ENCODE measurements at regions of chr5 and their contacts with region 1.

Region 1: DNA sequence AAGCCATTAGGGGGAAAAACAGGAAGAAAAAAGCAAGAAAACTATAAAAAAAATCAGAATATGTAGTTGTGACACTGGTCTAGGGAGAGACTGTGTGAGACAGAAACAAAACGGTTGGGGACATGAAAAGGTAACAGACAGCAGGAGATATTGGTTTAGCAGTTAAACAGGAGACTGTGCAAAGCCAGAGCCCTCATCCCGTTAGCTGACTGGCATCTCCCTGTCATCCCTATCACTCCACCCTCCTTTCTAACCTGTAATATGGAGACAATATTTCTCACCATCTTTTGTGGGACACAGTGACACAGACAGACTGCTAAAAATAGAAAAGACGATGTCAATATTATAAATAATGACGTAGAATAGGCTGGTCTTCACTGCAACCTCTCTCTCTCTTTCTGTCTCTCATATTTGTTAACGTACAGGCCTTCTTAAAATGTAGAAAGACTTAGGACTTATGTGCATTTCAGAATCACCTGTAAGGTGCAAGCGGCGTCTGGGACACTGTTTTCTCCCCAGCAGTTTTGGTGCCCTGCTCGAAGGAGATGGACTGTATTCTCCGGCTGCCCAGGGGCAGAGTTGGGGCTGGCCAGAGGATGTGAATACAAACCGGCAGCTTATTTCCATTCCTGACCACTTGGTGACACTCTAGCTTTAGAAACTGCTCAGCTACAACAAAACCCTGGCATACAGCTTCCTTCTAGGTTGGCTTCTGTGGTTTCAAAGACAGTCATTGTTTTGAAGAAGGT is 190.6 kb downstream of the MAT2B start:
- DNase-seq: peak; percentile 38 to 52
- H3K4me3 ChIP-seq: no peak overlapping the region
- H3K4me3 Mint-ChIP-seq: no peak overlapping the region
- H3K27ac Mint-ChIP-seq: no peak overlapping the region
- H3K4me1 ChIP-seq: no peaks in the 10 kb centered on the region
- H3K4me1 Mint-ChIP-seq: no peaks in the 10 kb centered on the region
- H3K27me3 ChIP-seq: no peaks in the 10 kb centered on the region
- H3K27me3 Mint-ChIP-seq: peaks cover 5% of the 10 kb centered on the region
- CTCF ChIP-seq: peak in 1 of 2 experiments; percentile 66

Region 2: DNA sequence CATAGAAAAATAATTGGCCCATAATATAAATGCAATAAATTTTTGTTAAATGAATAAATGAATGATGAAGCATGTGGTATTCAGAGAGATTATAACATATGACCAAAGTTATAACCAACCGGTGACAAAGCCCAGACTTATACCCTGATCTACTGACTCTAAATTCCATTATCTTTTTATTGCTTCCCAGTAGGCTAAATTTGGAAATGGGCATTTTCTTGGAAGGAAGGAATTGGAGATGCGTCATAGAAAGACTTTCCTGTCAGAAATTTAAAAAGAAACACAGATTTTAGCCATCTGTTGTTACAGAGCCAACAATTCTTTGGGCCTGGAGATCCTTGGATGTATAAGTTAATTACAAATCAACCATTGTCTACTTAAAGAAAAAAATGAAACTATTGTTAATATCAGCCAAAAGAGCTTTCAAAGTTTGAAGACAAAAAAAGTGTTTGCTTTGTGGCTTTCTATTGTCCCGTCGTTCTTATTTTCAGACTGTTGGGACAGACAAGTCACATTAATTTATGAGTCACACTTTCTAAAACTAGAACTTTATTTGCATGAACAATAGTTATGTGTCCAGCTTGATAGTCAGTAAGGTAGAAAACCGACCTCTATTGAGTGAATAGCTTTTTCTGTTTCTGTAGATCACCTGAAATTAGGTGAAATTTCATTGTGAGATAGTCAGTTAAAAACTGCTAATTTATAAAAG is 1199.8 kb before region 1 on chr5:
- CTCF ChIA-PET with region 1: no interaction called
- POLR2A ChIA-PET with region 1: no interaction called
- intact Hi-C with region 1: no loop called
- DNase-seq: no peak
- H3K4me3 ChIP-seq: no peak overlapping the region
- H3K4me3 Mint-ChIP-seq: no peak overlapping the region
- H3K27ac Mint-ChIP-seq: no peak overlapping the region
- H3K4me1 ChIP-seq: no peaks in the 10 kb centered on the region
- H3K4me1 Mint-ChIP-seq: no peaks in the 10 kb centered on the region
- H3K27me3 ChIP-seq: no peaks in the 10 kb centered on the region
- H3K27me3 Mint-ChIP-seq: no peaks in the 10 kb centered on the region
- CTCF ChIP-seq: no peak

Region 3: DNA sequence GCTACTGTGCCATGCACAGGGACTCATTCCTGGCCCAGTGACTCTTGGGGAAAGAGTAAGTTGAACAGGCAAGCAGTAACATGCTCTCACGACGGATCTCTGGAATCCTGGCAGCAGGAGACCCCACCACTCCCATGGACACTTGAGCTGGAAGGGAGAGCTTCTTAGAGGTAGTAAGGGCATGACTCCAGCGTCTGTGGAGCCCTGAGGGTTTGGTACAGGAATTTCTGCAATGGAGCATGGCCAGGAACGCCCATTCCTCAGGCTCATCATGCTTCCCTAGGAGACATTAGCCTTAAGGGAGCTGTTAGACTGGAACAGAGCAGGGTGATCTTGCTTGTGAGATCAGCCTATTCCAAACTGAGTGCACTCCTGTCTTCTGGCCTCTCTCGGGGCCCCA is 22.3 kb after region 1 on chr5:
- CTCF ChIA-PET with region 1: no interaction called
- POLR2A ChIA-PET with region 1: no interaction called
- intact Hi-C with region 1: no loop called
- DNase-seq: peak in 1 of 2 experiments; percentile 36
- H3K4me3 ChIP-seq: no peak overlapping the region
- H3K4me3 Mint-ChIP-seq: no peak overlapping the region
- H3K27ac Mint-ChIP-seq: no peak overlapping the region
- H3K4me1 ChIP-seq: no peaks in the 10 kb centered on the region
- H3K4me1 Mint-ChIP-seq: no peaks in the 10 kb centered on the region
- H3K27me3 ChIP-seq: no peaks in the 10 kb centered on the region
- H3K27me3 Mint-ChIP-seq: peaks cover 5% of the 10 kb centered on the region
- CTCF ChIP-seq: no peak

Region 4: DNA sequence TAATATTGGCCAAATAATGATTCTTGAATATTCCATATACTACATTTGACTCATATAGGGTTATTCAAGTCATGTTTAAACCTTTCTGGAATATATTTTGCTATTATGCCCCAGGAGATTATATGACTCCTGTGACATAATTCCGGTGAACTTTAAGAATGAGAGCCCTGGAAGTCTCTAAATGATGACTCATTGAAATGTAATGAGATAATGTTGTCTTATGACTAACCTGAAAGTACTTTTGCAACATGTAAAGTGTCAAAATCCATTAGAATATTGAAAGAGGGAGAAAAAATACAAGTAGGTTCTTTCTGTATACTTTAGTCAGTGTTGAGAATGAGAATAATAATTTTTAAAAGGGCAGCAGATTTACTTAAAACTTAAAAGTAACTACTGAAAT is 639.8 kb after region 1 on chr5:
- CTCF ChIA-PET with region 1: no interaction called
- POLR2A ChIA-PET with region 1: no interaction called
- intact Hi-C with region 1: no loop called
- DNase-seq: no peak
- H3K4me3 ChIP-seq: no peak overlapping the region
- H3K4me3 Mint-ChIP-seq: no peak overlapping the region
- H3K27ac Mint-ChIP-seq: no peak overlapping the region
- H3K4me1 ChIP-seq: no peaks in the 10 kb centered on the region
- H3K4me1 Mint-ChIP-seq: no peaks in the 10 kb centered on the region
- H3K27me3 ChIP-seq: no peaks in the 10 kb centered on the region
- H3K27me3 Mint-ChIP-seq: peaks cover 4% of the 10 kb centered on the region
- CTCF ChIP-seq: no peak

Region 5: GRCh38 chr5:164475339-164475977 is 779.5 kb after region 1 on chr5:
- CTCF ChIA-PET with region 1: no interaction called
- POLR2A ChIA-PET with region 1: no interaction called
- intact Hi-C with region 1: loop called (anchors 1 kb)
- DNase-seq: peak in 1 of 2 experiments; percentile 19
- H3K4me3 ChIP-seq: no peak overlapping the region
- H3K4me3 Mint-ChIP-seq: no peak overlapping the region
- H3K27ac Mint-ChIP-seq: no peak overlapping the region
- H3K4me1 ChIP-seq: no peaks in the 10 kb centered on the region
- H3K4me1 Mint-ChIP-seq: no peaks in the 10 kb centered on the region
- H3K27me3 ChIP-seq: no peaks in the 10 kb centered on the region
- H3K27me3 Mint-ChIP-seq: peaks cover 4% of the 10 kb centered on the region
- CTCF ChIP-seq: peak; percentile 40 to 56

Region 6: GRCh38 chr5:164504141-164504772 is 808.3 kb after region 1 on chr5:
- CTCF ChIA-PET with region 1: interaction called, 10 read pairs
- POLR2A ChIA-PET with region 1: no interaction called
- intact Hi-C with region 1: loop called (anchors 1 kb)
- DNase-seq: peak in 1 of 2 experiments; percentile 56
- H3K4me3 ChIP-seq: no peak overlapping the region
- H3K4me3 Mint-ChIP-seq: no peak overlapping the region
- H3K27ac Mint-ChIP-seq: no peak overlapping the region
- H3K4me1 ChIP-seq: no peaks in the 10 kb centered on the region
- H3K4me1 Mint-ChIP-seq: no peaks in the 10 kb centered on the region
- H3K27me3 ChIP-seq: no peaks in the 10 kb centered on the region
- H3K27me3 Mint-ChIP-seq: peaks cover 4% of the 10 kb centered on the region
- CTCF ChIP-seq: peak; percentile 70 to 79

Region 7: GRCh38 chr5:164972973-164973372 is 1277.0 kb after region 1 on chr5:
- CTCF ChIA-PET with region 1: no interaction called
- POLR2A ChIA-PET with region 1: no interaction called
- intact Hi-C with region 1: loop called (anchors 5 kb)
- DNase-seq: no peak
- H3K4me3 ChIP-seq: no peak overlapping the region
- H3K4me3 Mint-ChIP-seq: no peak overlapping the region
- H3K27ac Mint-ChIP-seq: no peak overlapping the region
- H3K4me1 ChIP-seq: no peaks in the 10 kb centered on the region
- H3K4me1 Mint-ChIP-seq: no peaks in the 10 kb centered on the region
- H3K27me3 ChIP-seq: no peaks in the 10 kb centered on the region
- H3K27me3 Mint-ChIP-seq: no peaks in the 10 kb centered on the region
- CTCF ChIP-seq: no peak